Activated CD8-positive, alpha-beta T cell treated with anti-CD3 and anti-CD28 coated beads for 36 hours (primary cell): ENCODE measurements at regions of chr12 and their contacts with region 1.

Region 1: DNA sequence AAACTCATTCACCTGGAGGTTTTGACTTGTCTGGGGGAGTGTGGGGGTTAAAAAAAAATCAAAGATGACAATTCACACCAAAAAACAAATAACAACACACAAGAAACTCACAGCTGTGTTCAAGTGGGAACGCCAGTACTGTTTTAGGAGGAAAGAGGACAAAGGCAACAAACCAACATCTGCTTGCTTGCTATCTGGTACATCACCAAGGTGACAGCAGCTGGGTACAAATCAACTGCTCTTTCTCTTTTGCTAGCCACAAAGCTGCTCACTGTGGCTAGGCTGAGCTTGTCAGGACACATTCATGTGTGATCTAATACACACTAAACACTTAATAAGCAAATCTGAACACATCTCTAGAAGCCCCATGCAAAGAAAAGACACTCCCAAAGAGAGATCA is 128.0 kb upstream of the RAP1B start:
- DNase-seq: peak; percentile 48
- ATAC-seq: peak; percentile 45
- H3K4me3 Mint-ChIP-seq: no peak overlapping the region
- H3K27ac Mint-ChIP-seq: peak overlapping the region; percentile 88
- H3K4me1 Mint-ChIP-seq: peaks cover 38% of the 10 kb centered on the region
- H3K27me3 Mint-ChIP-seq: no peaks in the 10 kb centered on the region
- CTCF ChIP-seq: no peak

Region 2: GRCh38 chr12:68364893-68365725 is 117.6 kb before region 1 on chr12:
- CTCF ChIA-PET with region 1: interaction called, 3 read pairs
- POLR2A ChIA-PET with region 1: no interaction called
- intact Hi-C with region 1: loop called (anchors 5 kb)
- DNase-seq: peak; percentile 94
- ATAC-seq: peak; percentile 94
- H3K4me3 Mint-ChIP-seq: peak overlapping the region; percentile 78
- H3K27ac Mint-ChIP-seq: peak overlapping the region; percentile 94
- H3K4me1 Mint-ChIP-seq: peaks cover 58% of the 10 kb centered on the region
- H3K27me3 Mint-ChIP-seq: no peaks in the 10 kb centered on the region
- CTCF ChIP-seq: no peak

Region 3: DNA sequence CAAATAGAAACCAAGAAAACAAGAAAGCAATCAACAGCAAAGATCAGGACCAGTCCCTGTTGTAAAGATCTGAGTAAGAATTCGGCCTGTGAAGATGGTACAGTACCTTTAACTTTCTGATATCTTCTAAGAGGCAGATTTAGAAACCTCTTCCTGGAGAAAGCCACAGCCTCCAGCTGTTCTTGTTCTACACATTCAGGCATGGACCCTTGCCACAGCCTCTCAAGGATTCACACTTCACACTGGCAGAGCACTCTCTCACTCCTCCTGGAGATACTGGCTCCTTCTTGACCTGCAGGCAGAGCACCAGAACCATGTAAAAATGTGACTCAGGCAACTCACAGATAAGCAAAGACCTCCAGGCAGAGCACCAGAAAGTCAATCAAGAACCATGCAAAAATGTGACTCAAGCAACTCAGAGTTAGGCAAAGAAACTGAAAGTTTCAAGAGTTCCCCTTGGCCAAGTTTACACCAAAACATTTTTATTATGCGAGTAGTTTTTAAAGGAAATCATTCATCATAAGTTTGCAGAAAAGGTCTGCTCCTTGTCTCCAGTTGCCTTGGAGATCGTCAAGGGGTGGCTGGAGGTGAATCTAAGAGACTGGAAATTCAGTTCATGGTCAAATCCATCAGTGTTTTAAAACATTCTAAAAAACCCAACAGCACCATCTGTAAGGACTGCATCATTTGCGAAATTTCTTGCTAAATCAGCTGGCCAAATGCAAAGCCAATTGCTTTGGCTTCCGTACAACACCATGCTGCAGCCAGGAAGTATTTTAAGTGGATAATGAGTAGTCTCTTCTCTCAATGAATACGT is 31.2 kb before region 1 on chr12:
- CTCF ChIA-PET with region 1: no interaction called
- POLR2A ChIA-PET with region 1: interaction called, 5 read pairs
- intact Hi-C with region 1: loop called (anchors 1 kb)
- DNase-seq: peak; percentile 66
- ATAC-seq: peak; percentile 82
- H3K4me3 Mint-ChIP-seq: peak overlapping the region; percentile 54
- H3K27ac Mint-ChIP-seq: peak overlapping the region; percentile 90
- H3K4me1 Mint-ChIP-seq: peaks cover 88% of the 10 kb centered on the region
- H3K27me3 Mint-ChIP-seq: no peaks in the 10 kb centered on the region
- CTCF ChIP-seq: no peak

Region 4: GRCh38 chr12:68557011-68557730 is 74.5 kb after region 1 on chr12:
- CTCF ChIA-PET with region 1: no interaction called
- POLR2A ChIA-PET with region 1: no interaction called
- intact Hi-C with region 1: no loop called
- DNase-seq: no peak
- ATAC-seq: no peak
- H3K4me3 Mint-ChIP-seq: no peak overlapping the region
- H3K27ac Mint-ChIP-seq: no peak overlapping the region
- H3K4me1 Mint-ChIP-seq: peaks cover 30% of the 10 kb centered on the region
- H3K27me3 Mint-ChIP-seq: no peaks in the 10 kb centered on the region
- CTCF ChIP-seq: no peak

Region 5: DNA sequence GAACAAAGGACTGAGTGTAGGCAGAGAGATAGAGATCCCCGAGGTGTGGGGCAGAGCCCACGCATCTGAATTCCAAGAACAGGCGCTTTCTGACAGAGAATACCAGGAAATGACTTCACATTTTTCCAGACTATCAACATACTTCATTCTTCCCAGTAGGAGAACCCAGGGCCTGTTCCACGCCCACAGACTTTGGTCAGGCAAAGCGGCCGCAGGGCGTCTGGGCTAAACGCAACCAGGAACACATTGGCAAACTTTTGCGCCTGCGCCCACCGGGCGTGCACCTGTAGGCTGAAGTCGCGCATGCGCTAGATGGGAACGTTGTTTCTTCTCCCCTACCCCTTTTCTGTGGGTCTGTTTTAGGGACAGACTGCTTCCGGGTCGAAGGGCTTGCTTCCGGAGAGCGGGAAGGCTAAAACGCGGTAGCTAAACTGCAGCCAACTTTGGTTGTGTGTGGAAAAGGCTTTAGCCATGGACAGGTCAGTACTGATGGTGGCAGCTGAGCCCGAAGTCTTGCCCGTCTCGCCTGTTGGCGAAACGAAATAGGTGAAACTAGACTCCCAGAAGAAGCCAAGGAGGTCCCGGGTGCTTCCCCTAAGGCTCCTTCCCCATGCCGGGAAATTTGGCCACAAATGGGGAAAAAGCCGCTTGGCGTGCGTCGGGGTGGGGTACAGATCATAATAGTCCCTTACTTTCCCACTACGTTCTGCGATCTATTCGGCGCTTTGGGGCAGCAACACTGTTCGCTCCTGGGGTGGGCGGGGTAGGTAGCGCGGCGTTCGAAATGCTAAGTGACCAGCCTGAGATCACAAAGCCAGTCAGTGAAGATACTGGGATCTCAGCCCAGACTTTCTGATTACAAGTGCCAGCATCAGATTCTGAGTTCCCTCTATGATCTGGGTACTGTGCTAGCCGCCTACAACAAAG is 204.2 kb after region 1 on chr12 and contains the start of gene NUP107:
- CTCF ChIA-PET with region 1: no interaction called
- POLR2A ChIA-PET with region 1: no interaction called
- intact Hi-C with region 1: loop called (anchors 5 kb)
- DNase-seq: peak; percentile 98
- ATAC-seq: peak; percentile 94
- H3K4me3 Mint-ChIP-seq: peak within 1 kb of the TSS; percentile 97
- H3K27ac Mint-ChIP-seq: peak within 1 kb of the TSS; percentile 99
- H3K4me1 Mint-ChIP-seq: peaks cover 44% of the 10 kb centered on the region
- H3K27me3 Mint-ChIP-seq: no peaks in the 10 kb centered on the region
- CTCF ChIP-seq: no peak
- total RNA-seq, gene NUP107: 142 to 143 TPM